ENCODE measurements at regions of chr4 and their contacts with region 1.

Region 1: GRCh38 chr4:113394730-113395530 is 345.5 kb downstream of the ANK2 start:
- DNase-seq: peak in 1 of 3 donors; percentile 86
- ATAC-seq: peak; percentile 98
- H3K4me3 ChIP-seq: no peak overlapping the region
- H3K4me1 ChIP-seq: no peaks in the 10 kb centered on the region
- CTCF ChIP-seq: peak; percentile 57

Region 2: DNA sequence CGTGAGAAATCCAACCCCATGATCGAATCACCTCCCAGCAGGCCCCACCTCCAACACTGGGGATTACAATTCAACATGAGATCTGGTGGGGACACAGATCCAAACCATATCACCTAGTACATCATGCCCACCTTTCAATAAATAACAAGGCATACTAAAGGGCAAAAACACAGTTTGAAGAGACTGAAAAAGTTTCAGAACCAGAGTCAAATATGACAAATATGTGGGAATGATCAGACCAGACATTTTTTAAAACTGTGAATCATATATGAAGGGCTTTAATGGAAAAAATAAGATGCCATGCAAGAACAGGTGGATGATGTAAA is 199.3 kb after region 1 on chr4:
- intact Hi-C with region 1: no loop called
- DNase-seq: no peak
- ATAC-seq: no peak
- H3K4me3 ChIP-seq: no peak overlapping the region
- H3K4me1 ChIP-seq: peaks cover 11% of the 10 kb centered on the region
- CTCF ChIP-seq: no peak

Region 3: DNA sequence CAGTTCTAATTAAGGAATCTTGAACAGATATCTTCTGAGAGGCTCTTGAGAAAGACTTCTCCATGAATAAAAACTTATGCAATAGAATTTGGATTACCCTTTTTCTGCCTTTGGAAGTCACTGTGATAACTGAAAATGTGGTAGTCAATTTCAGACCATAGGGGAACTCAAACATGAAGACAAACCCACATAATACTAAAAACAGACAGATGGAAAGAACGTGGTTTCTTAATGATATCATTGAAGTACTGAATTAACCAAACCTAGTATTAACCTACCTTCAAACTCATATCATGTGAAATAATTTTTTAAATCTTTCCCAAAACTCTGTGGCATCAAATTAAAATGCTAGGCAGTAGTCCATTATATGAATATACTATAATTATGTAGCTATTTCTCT is 213.1 kb after region 1 on chr4:
- intact Hi-C with region 1: no loop called
- DNase-seq: no peak
- ATAC-seq: no peak
- H3K4me3 ChIP-seq: no peak overlapping the region
- H3K4me1 ChIP-seq: no peaks in the 10 kb centered on the region
- CTCF ChIP-seq: no peak

Region 4: GRCh38 chr4:113773014-113773413 is 378.1 kb after region 1 on chr4:
- intact Hi-C with region 1: loop called in 1 of 2 experiments (anchors 10 kb)
- DNase-seq: no peak
- ATAC-seq: no peak
- H3K4me3 ChIP-seq: no peak overlapping the region
- H3K4me1 ChIP-seq: no peaks in the 10 kb centered on the region
- CTCF ChIP-seq: no peak

Region 5: GRCh38 chr4:113901994-113902787 is 507.3 kb after region 1 on chr4:
- intact Hi-C with region 1: loop called in 1 of 2 experiments (anchors 10 kb)
- DNase-seq: peak; percentile 75 to 82 (median 80)
- ATAC-seq: peak; percentile 98
- H3K4me3 ChIP-seq: no peak overlapping the region
- H3K4me1 ChIP-seq: no peaks in the 10 kb centered on the region
- CTCF ChIP-seq: peak; percentile 44